ENCODE measurements at regions of chr5 and their contacts with region 1.

Region 1: GRCh38 chr5:34474573-34475021 is 181.5 kb upstream of the RAI14 start:
- DNase-seq: peak in 1 of 2 experiments; percentile 59
- H3K4me3 ChIP-seq: no peak overlapping the region
- H3K4me3 Mint-ChIP-seq: no peak overlapping the region
- H3K27ac Mint-ChIP-seq: no peak overlapping the region
- H3K4me1 ChIP-seq: 0 out of 2 replicates have a peak, but pooled peaks cover 7% of the 10 kb centered on the region
- H3K4me1 Mint-ChIP-seq: peaks cover 7% of the 10 kb centered on the region
- H3K27me3 ChIP-seq: no peaks in the 10 kb centered on the region
- H3K27me3 Mint-ChIP-seq: no peaks in the 10 kb centered on the region
- CTCF ChIP-seq: peak; percentile 91 to 95

Region 2: GRCh38 chr5:34695275-34696027 is 220.9 kb after region 1 on chr5:
- CTCF ChIA-PET with region 1: no interaction called
- POLR2A ChIA-PET with region 1: no interaction called
- intact Hi-C with region 1: no loop called
- DNase-seq: no peak
- H3K4me3 ChIP-seq: no peak overlapping the region
- H3K4me3 Mint-ChIP-seq: no peak overlapping the region
- H3K27ac Mint-ChIP-seq: peak overlapping the region; percentile 56
- H3K4me1 ChIP-seq: peaks cover 31% of the 10 kb centered on the region
- H3K4me1 Mint-ChIP-seq: peaks cover 40% of the 10 kb centered on the region
- H3K27me3 ChIP-seq: no peaks in the 10 kb centered on the region
- H3K27me3 Mint-ChIP-seq: no peaks in the 10 kb centered on the region
- CTCF ChIP-seq: no peak

Region 3: GRCh38 chr5:34898258-34898895 is 423.8 kb after region 1 on chr5:
- CTCF ChIA-PET with region 1: interaction called, 7 read pairs
- POLR2A ChIA-PET with region 1: no interaction called
- intact Hi-C with region 1: loop called (anchors 1 kb)
- DNase-seq: peak; percentile 68 to 75
- H3K4me3 ChIP-seq: no peak overlapping the region
- H3K4me3 Mint-ChIP-seq: no peak overlapping the region
- H3K27ac Mint-ChIP-seq: peak overlapping the region; percentile 45
- H3K4me1 ChIP-seq: peaks cover 15% of the 10 kb centered on the region; the same call in 1 of the 2 replicates
- H3K4me1 Mint-ChIP-seq: no peaks in the 10 kb centered on the region
- H3K27me3 ChIP-seq: no peaks in the 10 kb centered on the region
- H3K27me3 Mint-ChIP-seq: no peaks in the 10 kb centered on the region
- CTCF ChIP-seq: peak; percentile 85 to 93

Region 4: DNA sequence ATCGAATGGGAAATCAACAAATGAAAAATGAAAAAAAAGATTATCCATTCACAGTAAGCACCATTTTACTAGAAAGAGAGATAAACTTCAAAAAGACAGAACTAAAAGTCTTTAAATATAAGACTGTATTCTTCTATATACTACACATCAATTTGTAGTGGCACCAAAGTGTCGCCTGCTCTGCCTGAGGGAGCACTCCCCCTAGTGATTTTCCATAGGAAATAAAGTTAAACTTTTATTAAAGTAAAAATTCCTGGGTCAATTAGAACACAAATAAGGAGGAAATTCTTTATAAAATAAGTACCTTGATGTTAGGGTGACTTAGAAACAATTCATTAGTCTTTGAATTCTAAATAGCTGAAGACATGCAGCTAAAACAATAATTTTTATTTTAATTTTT is 431.0 kb after region 1 on chr5:
- CTCF ChIA-PET with region 1: no interaction called
- POLR2A ChIA-PET with region 1: no interaction called
- intact Hi-C with region 1: loop called (anchors 1 kb)
- DNase-seq: no peak
- H3K4me3 ChIP-seq: no peak overlapping the region
- H3K4me3 Mint-ChIP-seq: no peak overlapping the region
- H3K27ac Mint-ChIP-seq: no peak overlapping the region
- H3K4me1 ChIP-seq: no peaks in the 10 kb centered on the region
- H3K4me1 Mint-ChIP-seq: no peaks in the 10 kb centered on the region
- H3K27me3 ChIP-seq: no peaks in the 10 kb centered on the region
- H3K27me3 Mint-ChIP-seq: no peaks in the 10 kb centered on the region
- CTCF ChIP-seq: peak; percentile 37 to 47

Region 5: DNA sequence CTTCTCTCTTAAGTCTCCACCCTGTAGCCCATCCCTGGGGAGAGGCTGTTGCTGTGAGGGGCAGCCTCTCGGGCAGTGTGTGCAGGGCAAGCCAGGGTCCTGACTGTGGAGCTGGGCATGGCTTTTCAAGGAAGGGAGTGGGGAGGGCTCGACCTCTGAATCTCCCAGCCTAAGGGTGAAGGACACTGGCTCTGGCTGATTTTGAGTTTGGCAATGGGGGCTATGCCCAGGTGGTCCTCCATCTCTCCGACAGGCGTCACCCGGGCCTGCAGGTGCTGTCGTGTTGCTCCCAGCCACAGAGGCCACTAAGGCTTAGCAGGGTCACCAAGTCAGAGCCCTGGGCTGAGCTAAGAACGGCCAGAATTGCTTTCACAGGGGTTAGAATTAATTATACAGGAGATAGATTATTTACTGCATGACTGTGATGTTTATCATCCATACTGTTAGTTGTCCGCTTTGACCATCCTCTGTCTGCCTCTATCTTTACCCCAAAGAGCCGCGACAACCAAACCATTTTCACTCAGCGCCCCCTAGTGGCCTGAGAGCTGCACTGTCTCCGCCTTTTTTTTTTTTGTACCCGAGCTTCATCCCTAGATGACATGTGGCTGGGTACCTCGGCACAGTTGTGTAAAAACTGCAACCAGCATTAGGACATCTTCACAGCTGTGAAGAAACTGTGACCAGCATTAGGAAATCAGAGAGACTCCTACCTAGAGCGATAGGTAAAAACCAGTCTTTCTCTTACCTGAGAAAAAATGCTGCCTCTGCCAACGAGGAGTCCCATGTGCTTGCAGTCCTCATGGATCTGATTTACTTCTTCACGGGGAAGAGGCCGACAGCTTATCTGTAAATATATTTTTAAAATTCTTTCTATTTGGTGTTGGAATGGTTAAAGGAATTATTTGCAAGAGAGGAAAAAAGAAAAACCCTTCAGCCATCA is 528.7 kb after region 1 on chr5:
- CTCF ChIA-PET with region 1: interaction called, 9 read pairs
- POLR2A ChIA-PET with region 1: no interaction called
- intact Hi-C with region 1: loop called (anchors 1 kb)
- DNase-seq: peak; percentile 43 to 78
- H3K4me3 ChIP-seq: no peak overlapping the region
- H3K4me3 Mint-ChIP-seq: no peak overlapping the region
- H3K27ac Mint-ChIP-seq: no peak overlapping the region
- H3K4me1 ChIP-seq: no peaks in the 10 kb centered on the region
- H3K4me1 Mint-ChIP-seq: no peaks in the 10 kb centered on the region
- H3K27me3 ChIP-seq: no peaks in the 10 kb centered on the region
- H3K27me3 Mint-ChIP-seq: peaks cover 2% of the 10 kb centered on the region
- CTCF ChIP-seq: peak; percentile 90 to 95